ENCODE measurements at regions of chr1 and their contacts with region 1.

Region 1: GRCh38 chr1:181105134-181106021 is 16.9 kb downstream of the IER5 start:
- DNase-seq: peak; percentile 94
- ATAC-seq: peak; percentile 86
- H3K4me3 ChIP-seq: peak overlapping the region in 4 of 5 experiments; percentile 78 to 87 (median 83)
- H3K4me3 Mint-ChIP-seq: peak overlapping the region; percentile 90
- H3K27ac ChIP-seq: peak overlapping the region; percentile 66 to 85
- H3K27ac Mint-ChIP-seq: peak overlapping the region; percentile 87
- H3K4me1 ChIP-seq: peaks cover 16 to 23% of the 10 kb centered on the region in 2 donors
- H3K4me1 Mint-ChIP-seq: peaks cover 37% of the 10 kb centered on the region
- H3K27me3 ChIP-seq: no peaks in the 10 kb centered on the region
- H3K27me3 Mint-ChIP-seq: no peaks in the 10 kb centered on the region
- CTCF ChIP-seq: no peak

Region 2: GRCh38 chr1:181073638-181074037 is 31.7 kb before region 1 on chr1:
- CTCF ChIA-PET with region 1: no interaction called
- POLR2A ChIA-PET with region 1: no interaction called
- intact Hi-C with region 1: no loop called
- DNase-seq: no peak
- ATAC-seq: no peak
- H3K4me3 ChIP-seq: no peak overlapping the region
- H3K4me3 Mint-ChIP-seq: no peak overlapping the region
- H3K27ac ChIP-seq: no peak overlapping the region
- H3K27ac Mint-ChIP-seq: no peak overlapping the region
- H3K4me1 ChIP-seq: no peaks in the 10 kb centered on the region
- H3K4me1 Mint-ChIP-seq: peaks cover 2% of the 10 kb centered on the region
- H3K27me3 ChIP-seq: peaks cover 0 to 7% (median 0%) of the 10 kb centered on the region in 4 experiments
- H3K27me3 Mint-ChIP-seq: peaks cover 29% of the 10 kb centered on the region
- CTCF ChIP-seq: no peak

Region 3: GRCh38 chr1:181128592-181129497 is 23.5 kb after region 1 on chr1:
- CTCF ChIA-PET with region 1: interaction called, 10 read pairs
- POLR2A ChIA-PET with region 1: interaction called, 40 read pairs
- intact Hi-C with region 1: loop called (anchors 1 kb)
- DNase-seq: peak; percentile 82
- ATAC-seq: peak; percentile 73
- H3K4me3 ChIP-seq: peak overlapping the region; percentile 18 to 66 (median 50)
- H3K4me3 Mint-ChIP-seq: peak overlapping the region; percentile 92
- H3K27ac ChIP-seq: peak overlapping the region; percentile 86 to 91
- H3K27ac Mint-ChIP-seq: peak overlapping the region; percentile 93
- H3K4me1 ChIP-seq: peaks cover 79 to 85% of the 10 kb centered on the region in 2 donors
- H3K4me1 Mint-ChIP-seq: peaks cover 84% of the 10 kb centered on the region
- H3K27me3 ChIP-seq: no peaks in the 10 kb centered on the region
- H3K27me3 Mint-ChIP-seq: no peaks in the 10 kb centered on the region
- CTCF ChIP-seq: no peak

Region 4: GRCh38 chr1:181134543-181135362 is 29.4 kb after region 1 on chr1:
- CTCF ChIA-PET with region 1: interaction called, 125 read pairs
- POLR2A ChIA-PET with region 1: interaction called, 40 read pairs
- intact Hi-C with region 1: loop called (anchors 1 kb)
- DNase-seq: peak; percentile 77
- ATAC-seq: peak; percentile 53
- H3K4me3 ChIP-seq: peak overlapping the region in 4 of 5 experiments; percentile 11 to 42 (median 17)
- H3K4me3 Mint-ChIP-seq: peak overlapping the region; percentile 86
- H3K27ac ChIP-seq: peak overlapping the region; percentile 91 to 92
- H3K27ac Mint-ChIP-seq: peak overlapping the region; percentile 99
- H3K4me1 ChIP-seq: peaks cover 77 to 85% of the 10 kb centered on the region in 2 donors
- H3K4me1 Mint-ChIP-seq: peaks cover 95% of the 10 kb centered on the region
- H3K27me3 ChIP-seq: no peaks in the 10 kb centered on the region
- H3K27me3 Mint-ChIP-seq: no peaks in the 10 kb centered on the region
- CTCF ChIP-seq: no peak